ENCODE measurements at regions of chr12 and their contacts with region 1.

Region 1: DNA sequence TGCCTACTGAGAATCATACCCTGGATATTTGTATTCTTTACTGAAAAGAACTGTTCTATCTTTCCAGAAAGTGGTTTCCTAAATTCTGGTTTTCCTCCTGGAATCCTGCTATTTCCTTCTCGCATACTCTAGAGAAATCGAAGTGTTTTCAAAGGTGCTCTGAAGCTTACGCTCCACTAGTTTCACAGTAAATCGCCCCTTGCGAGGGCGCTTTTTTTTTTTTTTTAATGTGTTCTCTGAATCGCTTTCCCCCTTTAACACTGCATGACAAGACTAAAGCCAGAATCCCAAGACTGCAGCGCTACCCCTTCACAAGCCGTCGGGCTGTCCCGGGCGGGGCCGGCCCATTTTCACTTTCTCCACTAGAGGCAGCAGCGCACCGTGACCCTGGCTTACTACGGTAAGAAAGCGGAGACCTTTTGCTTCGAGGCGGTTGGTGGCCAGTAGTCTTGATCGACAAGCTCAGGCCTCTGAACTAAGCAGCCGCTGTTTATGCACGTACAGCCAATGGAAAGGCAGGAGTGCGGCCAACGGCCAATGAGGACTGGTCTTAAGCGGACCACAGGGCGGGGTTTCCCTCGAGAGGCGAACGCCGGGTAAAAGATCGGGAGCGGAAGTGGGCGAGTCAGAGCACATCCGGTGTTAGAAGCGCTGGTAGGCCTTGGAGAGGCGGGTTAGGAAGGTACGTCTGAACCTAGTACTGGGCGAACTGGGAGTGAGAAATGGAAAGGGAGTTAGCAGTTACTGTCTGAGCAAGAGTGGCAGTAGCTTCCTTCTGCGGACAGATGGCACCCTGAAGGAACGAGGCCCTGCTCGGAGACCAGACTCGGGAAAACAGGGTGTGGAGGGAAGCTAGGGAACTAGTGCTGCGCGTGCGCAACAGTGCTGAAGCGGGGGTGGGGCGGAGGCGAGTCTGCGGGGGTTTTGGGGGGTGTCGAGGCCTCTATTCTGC is at the start of gene TMBIM6:
- DNase-seq: peak; percentile 99
- H3K4me3 Mint-ChIP-seq: peak within 1 kb of the TSS; percentile 86
- H3K27ac Mint-ChIP-seq: peak within 1 kb of the TSS; percentile 94
- H3K4me1 Mint-ChIP-seq: peaks cover 30% of the 10 kb centered on the region
- H3K27me3 Mint-ChIP-seq: peaks cover 4% of the 10 kb centered on the region
- total RNA-seq, gene TMBIM6: 382 and 393 TPM in 2 replicates

Region 2: GRCh38 chr12:49366652-49367380 is 374.4 kb before region 1 on chr12:
- intact Hi-C with region 1: loop called (anchors 5 kb)
- DNase-seq: peak; percentile 89
- H3K4me3 Mint-ChIP-seq: peak overlapping the region; percentile 87
- H3K27ac Mint-ChIP-seq: peak overlapping the region; percentile 94
- H3K4me1 Mint-ChIP-seq: peaks cover 48% of the 10 kb centered on the region
- H3K27me3 Mint-ChIP-seq: no peaks in the 10 kb centered on the region

Region 3: GRCh38 chr12:49636979-49637755 is 104.0 kb before region 1 on chr12:
- intact Hi-C with region 1: loop called (anchors 1 kb)
- DNase-seq: peak; percentile 54
- H3K4me3 Mint-ChIP-seq: no peak overlapping the region
- H3K27ac Mint-ChIP-seq: peak overlapping the region; percentile 24
- H3K4me1 Mint-ChIP-seq: peaks cover 11% of the 10 kb centered on the region
- H3K27me3 Mint-ChIP-seq: no peaks in the 10 kb centered on the region

Region 4: DNA sequence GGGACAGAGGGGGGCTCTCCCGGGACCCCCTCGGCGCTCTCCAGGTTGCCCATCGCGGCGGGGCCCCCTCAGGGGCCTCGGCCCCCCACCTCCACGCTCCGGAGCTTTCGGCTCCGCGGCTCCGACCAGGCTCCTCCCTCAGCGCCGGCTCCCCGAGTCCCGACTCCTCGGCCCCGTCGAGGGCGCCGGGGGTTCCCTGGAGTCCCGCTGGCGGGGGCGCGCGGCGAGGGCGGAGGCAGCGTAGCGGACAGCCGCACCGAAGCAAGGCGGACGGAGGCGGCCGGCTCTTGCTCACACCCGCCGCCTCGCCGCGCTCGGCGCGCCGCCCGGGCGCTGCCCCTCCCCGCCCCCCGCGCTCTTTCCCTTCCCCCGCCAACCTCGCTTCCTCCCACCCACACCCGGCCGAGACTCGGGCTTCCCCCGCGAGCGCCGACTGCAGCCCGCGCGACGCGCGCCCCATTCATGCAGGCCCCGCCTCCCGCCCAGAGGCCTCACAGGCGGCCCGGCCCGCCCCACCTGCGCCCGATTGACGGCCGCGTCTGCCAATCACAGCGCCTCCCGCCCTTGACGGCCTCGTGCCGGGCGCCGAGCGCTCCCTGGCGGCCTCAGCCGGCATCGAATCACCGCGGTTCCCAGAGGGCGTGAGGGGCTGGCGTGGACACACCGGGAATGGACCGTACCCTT is 33.9 kb before region 1 on chr12 and contains the start of gene FMNL3:
- intact Hi-C with region 1: loop called (anchors 1 kb)
- DNase-seq: peak; percentile 98
- H3K4me3 Mint-ChIP-seq: peak within 1 kb of the TSS; percentile 96
- H3K27ac Mint-ChIP-seq: peak within 1 kb of the TSS; percentile 89
- H3K4me1 Mint-ChIP-seq: peaks cover 48% of the 10 kb centered on the region
- H3K27me3 Mint-ChIP-seq: peaks cover 20% of the 10 kb centered on the region
- total RNA-seq, gene FMNL3: 43.0 and 46.1 TPM in 2 replicates

Region 5: GRCh38 chr12:49828133-49829091 is 87.2 kb after region 1 on chr12 and contains the start of gene NCKAP5L:
- intact Hi-C with region 1: loop called (anchors 1 kb)
- DNase-seq: peak; percentile 86
- H3K4me3 Mint-ChIP-seq: peak within 1 kb of the TSS; percentile 96
- H3K27ac Mint-ChIP-seq: peak within 1 kb of the TSS; percentile 91
- H3K4me1 Mint-ChIP-seq: peaks cover 28% of the 10 kb centered on the region
- H3K27me3 Mint-ChIP-seq: peaks cover 24% of the 10 kb centered on the region
- total RNA-seq, gene NCKAP5L: 3.8 TPM in 2 replicates

Region 6: DNA sequence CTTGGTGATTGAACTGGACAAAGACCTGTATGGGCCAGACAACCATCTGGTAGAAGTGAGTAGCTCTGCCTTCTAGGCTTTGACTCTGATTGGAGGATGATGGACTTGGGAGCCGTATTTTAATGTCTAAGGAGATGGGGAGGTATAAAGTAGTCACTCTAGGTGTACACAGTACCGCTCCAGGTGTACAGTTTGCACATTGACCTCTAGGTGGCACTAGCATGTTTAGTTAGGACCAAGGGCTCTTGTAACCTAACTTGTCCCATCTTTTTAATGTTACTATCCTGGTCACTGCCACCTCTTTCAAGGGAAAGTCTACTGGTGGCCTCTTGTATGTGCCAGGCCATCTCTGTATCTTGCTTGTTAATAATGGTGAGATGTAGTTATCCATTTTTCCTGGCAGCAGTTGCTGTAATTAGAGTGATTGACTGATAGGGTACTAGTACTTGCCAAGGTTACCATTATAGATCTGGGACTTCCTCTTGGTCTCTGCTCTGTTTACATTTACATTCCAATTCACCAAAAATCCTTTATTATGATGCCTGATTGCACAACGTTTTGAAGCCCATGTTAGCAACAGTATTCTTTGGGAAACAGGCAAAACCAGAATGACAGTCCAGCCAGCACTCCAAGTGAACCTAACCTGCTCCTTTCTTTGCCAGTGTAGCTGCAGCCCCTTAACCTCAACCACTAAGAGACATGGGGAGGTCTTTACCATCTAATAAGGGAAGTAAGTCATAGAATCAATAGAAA is 347.6 kb after region 1 on chr12:
- intact Hi-C with region 1: no loop called
- DNase-seq: peak; percentile 36
- H3K4me3 Mint-ChIP-seq: peak overlapping the region; percentile 2
- H3K27ac Mint-ChIP-seq: no peak overlapping the region
- H3K4me1 Mint-ChIP-seq: peaks cover 31% of the 10 kb centered on the region
- H3K27me3 Mint-ChIP-seq: no peaks in the 10 kb centered on the region

Measured in activated T-helper 1 cell treated with anti-CD3 and anti-CD28 coated beads, Interleukin-12 subunit alpha, Interleukin-12 subunit beta, Interleukin-2, Interleukin-4 antibody, amounts not matched to agents 30 ng/mL and 10 ng/mL and 1 ng/mL, durations not matched to agents 14 hours and 24 hours and 36 hours (primary cell).